B cell (primary cell): ENCODE measurements at regions of chr19 and their contacts with region 1.

Region 1: GRCh38 chr19:49497047-49497788 is 984 bp downstream of the RPS11 start:
- DNase-seq: peak; percentile 92
- ATAC-seq: peak; percentile 9
- H3K4me3 ChIP-seq: peak overlapping the region; percentile 74 to 99 (median 98)
- H3K4me3 Mint-ChIP-seq: peak overlapping the region; percentile 98
- H3K27ac ChIP-seq: peak overlapping the region; percentile 97 to 99
- H3K27ac Mint-ChIP-seq: peak overlapping the region; percentile 99
- H3K4me1 ChIP-seq: peaks cover 32 to 61% of the 10 kb centered on the region in 2 donors
- H3K4me1 Mint-ChIP-seq: peaks cover 71% of the 10 kb centered on the region
- H3K27me3 ChIP-seq: no peaks in the 10 kb centered on the region
- H3K27me3 Mint-ChIP-seq: no peaks in the 10 kb centered on the region
- CTCF ChIP-seq: no peak

Region 2: GRCh38 chr19:49127674-49128544 is 369.3 kb before region 1 on chr19:
- CTCF ChIA-PET with region 1: no interaction called
- POLR2A ChIA-PET with region 1: interaction called, 10 read pairs
- intact Hi-C with region 1: no loop called
- DNase-seq: peak; percentile 97
- ATAC-seq: peak; percentile 96
- H3K4me3 ChIP-seq: peak overlapping the region; percentile 34 to 71 (median 50)
- H3K4me3 Mint-ChIP-seq: peak overlapping the region; percentile 85
- H3K27ac ChIP-seq: no peak overlapping the region
- H3K27ac Mint-ChIP-seq: peak overlapping the region; percentile 34
- H3K4me1 ChIP-seq: peaks cover 9 to 13% of the 10 kb centered on the region in 2 donors
- H3K4me1 Mint-ChIP-seq: peaks cover 15% of the 10 kb centered on the region
- H3K27me3 ChIP-seq: peaks cover 0 to 2% (median 0%) of the 10 kb centered on the region in 4 experiments
- H3K27me3 Mint-ChIP-seq: no peaks in the 10 kb centered on the region
- CTCF ChIP-seq: no peak

Region 3: GRCh38 chr19:49443366-49444099 is 53.7 kb before region 1 on chr19:
- CTCF ChIA-PET with region 1: no interaction called
- POLR2A ChIA-PET with region 1: no interaction called
- intact Hi-C with region 1: loop called (anchors 2 kb)
- DNase-seq: peak; percentile 98
- ATAC-seq: peak; percentile 85
- H3K4me3 ChIP-seq: peak overlapping the region; percentile 12 to 80 (median 71)
- H3K4me3 Mint-ChIP-seq: peak overlapping the region; percentile 93
- H3K27ac ChIP-seq: peak overlapping the region; percentile 65 to 72
- H3K27ac Mint-ChIP-seq: peak overlapping the region; percentile 95
- H3K4me1 ChIP-seq: peaks cover 18 to 31% of the 10 kb centered on the region in 2 donors
- H3K4me1 Mint-ChIP-seq: peaks cover 35% of the 10 kb centered on the region
- H3K27me3 ChIP-seq: peaks cover 2 to 39% (median 34%) of the 10 kb centered on the region in 4 experiments
- H3K27me3 Mint-ChIP-seq: peaks cover 37% of the 10 kb centered on the region
- CTCF ChIP-seq: peak; percentile 89

Region 4: DNA sequence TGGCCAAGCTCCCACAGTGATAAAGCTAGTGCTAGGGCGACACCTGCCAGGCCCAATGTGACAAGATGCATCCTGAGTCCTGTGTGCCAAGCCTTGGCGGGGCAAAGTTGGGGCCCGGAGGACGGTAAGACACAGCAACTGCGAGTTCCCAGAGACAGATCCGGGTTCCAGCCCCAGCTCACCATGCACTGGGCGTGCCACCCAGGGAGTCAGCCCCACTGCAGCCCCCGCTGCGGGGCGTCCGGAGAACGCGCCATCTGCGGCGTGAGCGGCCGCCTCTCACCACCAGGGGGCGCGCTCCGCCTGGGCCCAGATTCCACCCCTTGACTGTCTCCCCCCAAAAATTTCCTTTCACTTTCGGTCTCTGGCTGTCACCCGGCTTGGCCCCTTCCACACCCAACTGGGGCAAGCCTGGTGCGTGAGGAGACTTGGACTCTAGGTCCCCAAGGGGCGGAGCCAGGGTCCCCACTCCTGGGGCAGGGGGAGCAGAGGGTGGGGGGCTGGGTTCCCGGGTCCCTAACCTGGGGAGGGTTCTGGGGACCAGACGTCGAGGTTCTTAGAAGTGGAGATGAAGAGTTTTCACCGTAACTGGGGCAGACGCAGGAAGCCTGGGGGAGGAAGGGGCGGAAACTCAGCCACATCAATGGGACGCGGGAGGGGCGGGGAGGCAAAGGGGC is 23.2 kb before region 1 on chr19 and contains the start of gene FLT3LG:
- CTCF ChIA-PET with region 1: interaction called, 4 read pairs
- POLR2A ChIA-PET with region 1: interaction called, 10 read pairs
- intact Hi-C with region 1: no loop called
- DNase-seq: peak; percentile 94
- ATAC-seq: peak; percentile 52
- H3K4me3 ChIP-seq: peak within 1 kb of the TSS in 4 of 5 experiments; percentile 53 to 98 (median 70)
- H3K4me3 Mint-ChIP-seq: peak within 1 kb of the TSS; percentile 93
- H3K27ac ChIP-seq: peak within 1 kb of the TSS; percentile 75 to 81
- H3K27ac Mint-ChIP-seq: peak within 1 kb of the TSS; percentile 97
- H3K4me1 ChIP-seq: peaks cover 43 to 73% of the 10 kb centered on the region in 2 donors
- H3K4me1 Mint-ChIP-seq: peaks cover 57% of the 10 kb centered on the region
- H3K27me3 ChIP-seq: no peaks in the 10 kb centered on the region
- H3K27me3 Mint-ChIP-seq: no peaks in the 10 kb centered on the region
- CTCF ChIP-seq: peak; percentile 89
- total RNA-seq, gene FLT3LG: 27.8 and 31.0 TPM in 2 replicates

Region 5: GRCh38 chr19:49640113-49640898 is 143.1 kb after region 1 on chr19 and contains the start of gene RRAS:
- CTCF ChIA-PET with region 1: interaction called, 3 read pairs
- POLR2A ChIA-PET with region 1: interaction called, 3 read pairs
- intact Hi-C with region 1: loop called (anchors 1 kb)
- DNase-seq: peak; percentile 100
- ATAC-seq: peak; percentile 69
- H3K4me3 ChIP-seq: peak within 1 kb of the TSS; percentile 35 to 97 (median 80)
- H3K4me3 Mint-ChIP-seq: peak within 1 kb of the TSS; percentile 95
- H3K27ac ChIP-seq: peak within 1 kb of the TSS; percentile 91 to 96
- H3K27ac Mint-ChIP-seq: peak within 1 kb of the TSS; percentile 95
- H3K4me1 ChIP-seq: peaks cover 37 to 55% of the 10 kb centered on the region in 2 donors
- H3K4me1 Mint-ChIP-seq: peaks cover 53% of the 10 kb centered on the region
- H3K27me3 ChIP-seq: no peaks in the 10 kb centered on the region
- H3K27me3 Mint-ChIP-seq: no peaks in the 10 kb centered on the region
- CTCF ChIP-seq: no peak
- total RNA-seq, gene RRAS: 5.6 and 6.3 TPM in 2 replicates

Region 6: GRCh38 chr19:49869441-49870176 is 372.4 kb after region 1 on chr19:
- CTCF ChIA-PET with region 1: no interaction called
- POLR2A ChIA-PET with region 1: no interaction called
- intact Hi-C with region 1: loop called (anchors 2 kb)
- DNase-seq: peak; percentile 97
- ATAC-seq: peak; percentile 80
- H3K4me3 ChIP-seq: peak overlapping the region; percentile 42 to 74 (median 69)
- H3K4me3 Mint-ChIP-seq: no peak overlapping the region
- H3K27ac ChIP-seq: peak overlapping the region; percentile 97 to 98
- H3K27ac Mint-ChIP-seq: peak overlapping the region; percentile 77
- H3K4me1 ChIP-seq: peaks cover 30 to 50% of the 10 kb centered on the region in 2 donors
- H3K4me1 Mint-ChIP-seq: peaks cover 42% of the 10 kb centered on the region
- H3K27me3 ChIP-seq: no peaks in the 10 kb centered on the region
- H3K27me3 Mint-ChIP-seq: no peaks in the 10 kb centered on the region
- CTCF ChIP-seq: no peak